Caco-2 (cell line): ENCODE measurements at regions of chr6 and their contacts with region 1.

Region 1: DNA sequence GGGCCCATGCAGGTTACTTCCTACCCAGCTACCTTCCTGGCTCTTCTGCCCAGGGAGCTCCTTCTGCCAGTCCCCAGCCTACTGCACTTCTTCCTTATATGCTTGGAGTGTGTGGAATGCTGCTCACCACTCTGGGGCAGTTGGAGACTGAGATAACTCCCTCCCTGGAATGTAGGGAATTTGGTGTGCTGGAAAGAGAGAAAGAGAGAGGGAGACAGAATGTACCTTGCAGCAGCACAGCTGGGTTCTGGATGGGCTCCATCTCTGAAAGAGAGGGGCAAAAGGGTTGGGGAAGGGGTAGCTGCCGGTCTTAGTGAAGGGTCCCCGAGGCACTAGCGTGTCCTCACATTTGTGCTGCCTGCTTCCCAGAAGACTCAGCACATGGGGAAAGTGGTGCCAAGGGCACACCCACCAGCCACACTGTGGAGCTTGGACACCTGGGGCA is 40.2 kb upstream of the DDR1 start:
- DNase-seq: peak; percentile 69 to 81
- H3K4me3 ChIP-seq: no peak overlapping the region
- H3K4me3 Mint-ChIP-seq: peak overlapping the region; percentile 13
- H3K27ac Mint-ChIP-seq: peak overlapping the region; percentile 79
- H3K4me1 ChIP-seq: peaks cover 49% of the 10 kb centered on the region
- H3K4me1 Mint-ChIP-seq: peaks cover 36% of the 10 kb centered on the region
- H3K27me3 ChIP-seq: no peaks in the 10 kb centered on the region
- H3K27me3 Mint-ChIP-seq: no peaks in the 10 kb centered on the region
- CTCF ChIP-seq: peak in 1 of 2 experiments; percentile 28

Region 2: DNA sequence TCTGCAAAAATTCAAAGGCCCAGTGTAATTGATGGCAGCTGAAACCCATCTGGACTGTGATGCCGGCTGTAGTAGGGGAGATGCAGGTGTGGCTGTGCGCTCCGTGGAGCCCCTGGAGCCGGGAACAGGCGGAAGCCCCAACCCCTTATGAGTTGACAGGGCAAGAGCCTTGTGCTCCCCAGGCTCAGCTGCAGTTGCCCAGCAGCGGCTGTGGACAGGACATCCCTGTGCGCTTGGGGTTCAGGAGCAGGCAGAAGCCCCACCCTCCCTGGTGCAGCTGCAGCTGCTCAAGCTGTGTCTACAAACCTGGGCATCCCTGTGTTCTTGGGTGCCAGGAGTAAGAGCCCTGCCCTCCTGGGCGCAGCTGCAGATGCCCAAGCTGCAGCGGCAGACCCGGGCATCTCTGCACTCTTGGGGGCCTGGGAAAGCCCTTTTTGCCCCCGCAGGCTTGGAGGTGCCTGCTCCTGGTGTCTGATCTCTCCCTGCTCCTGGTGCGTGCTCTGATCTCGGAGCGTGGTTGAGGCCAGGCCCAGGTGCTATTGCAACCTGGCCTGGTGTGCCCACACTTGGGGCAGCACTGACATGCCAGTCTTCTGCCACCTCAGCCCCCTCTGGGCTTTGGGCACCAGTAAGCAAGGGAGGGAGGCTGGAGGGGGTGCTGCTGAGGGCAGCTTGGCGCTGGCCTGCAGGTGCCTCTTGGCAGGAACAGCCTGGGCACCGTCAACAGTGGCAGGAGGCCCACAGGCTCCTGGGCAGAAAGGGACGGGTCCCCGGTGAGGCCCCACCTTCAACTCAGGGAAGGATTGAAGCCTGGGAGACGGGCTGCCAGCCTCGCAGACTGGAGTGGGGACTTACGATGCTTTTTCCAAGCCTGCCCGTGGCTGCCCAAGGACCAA is 1643.1 kb before region 1 on chr6:
- CTCF ChIA-PET with region 1: no interaction called
- POLR2A ChIA-PET with region 1: no interaction called
- intact Hi-C with region 1: no loop called
- DNase-seq: no peak
- H3K4me3 ChIP-seq: no peak overlapping the region
- H3K4me3 Mint-ChIP-seq: no peak overlapping the region
- H3K27ac Mint-ChIP-seq: no peak overlapping the region
- H3K4me1 ChIP-seq: no peaks in the 10 kb centered on the region
- H3K4me1 Mint-ChIP-seq: peaks cover 11% of the 10 kb centered on the region
- H3K27me3 ChIP-seq: no peaks in the 10 kb centered on the region
- H3K27me3 Mint-ChIP-seq: no peaks in the 10 kb centered on the region
- CTCF ChIP-seq: no peak

Region 3: GRCh38 chr6:30717042-30717844 is 126.9 kb before region 1 on chr6 and contains the start of gene MDC1:
- CTCF ChIA-PET with region 1: no interaction called
- POLR2A ChIA-PET with region 1: no interaction called
- intact Hi-C with region 1: no loop called
- DNase-seq: peak; percentile 99 to 100
- H3K4me3 ChIP-seq: peak within 1 kb of the TSS; percentile 56
- H3K4me3 Mint-ChIP-seq: peak within 1 kb of the TSS; percentile 95
- H3K27ac Mint-ChIP-seq: peak within 1 kb of the TSS; percentile 100
- H3K4me1 ChIP-seq: peaks cover 10% of the 10 kb centered on the region; the same call in 1 of the 2 replicates
- H3K4me1 Mint-ChIP-seq: peaks cover 14% of the 10 kb centered on the region
- H3K27me3 ChIP-seq: no peaks in the 10 kb centered on the region
- H3K27me3 Mint-ChIP-seq: no peaks in the 10 kb centered on the region
- CTCF ChIP-seq: peak; percentile 17 to 31
- total RNA-seq, gene MDC1: 46.6 and 48.6 TPM in 2 replicates

Region 4: DNA sequence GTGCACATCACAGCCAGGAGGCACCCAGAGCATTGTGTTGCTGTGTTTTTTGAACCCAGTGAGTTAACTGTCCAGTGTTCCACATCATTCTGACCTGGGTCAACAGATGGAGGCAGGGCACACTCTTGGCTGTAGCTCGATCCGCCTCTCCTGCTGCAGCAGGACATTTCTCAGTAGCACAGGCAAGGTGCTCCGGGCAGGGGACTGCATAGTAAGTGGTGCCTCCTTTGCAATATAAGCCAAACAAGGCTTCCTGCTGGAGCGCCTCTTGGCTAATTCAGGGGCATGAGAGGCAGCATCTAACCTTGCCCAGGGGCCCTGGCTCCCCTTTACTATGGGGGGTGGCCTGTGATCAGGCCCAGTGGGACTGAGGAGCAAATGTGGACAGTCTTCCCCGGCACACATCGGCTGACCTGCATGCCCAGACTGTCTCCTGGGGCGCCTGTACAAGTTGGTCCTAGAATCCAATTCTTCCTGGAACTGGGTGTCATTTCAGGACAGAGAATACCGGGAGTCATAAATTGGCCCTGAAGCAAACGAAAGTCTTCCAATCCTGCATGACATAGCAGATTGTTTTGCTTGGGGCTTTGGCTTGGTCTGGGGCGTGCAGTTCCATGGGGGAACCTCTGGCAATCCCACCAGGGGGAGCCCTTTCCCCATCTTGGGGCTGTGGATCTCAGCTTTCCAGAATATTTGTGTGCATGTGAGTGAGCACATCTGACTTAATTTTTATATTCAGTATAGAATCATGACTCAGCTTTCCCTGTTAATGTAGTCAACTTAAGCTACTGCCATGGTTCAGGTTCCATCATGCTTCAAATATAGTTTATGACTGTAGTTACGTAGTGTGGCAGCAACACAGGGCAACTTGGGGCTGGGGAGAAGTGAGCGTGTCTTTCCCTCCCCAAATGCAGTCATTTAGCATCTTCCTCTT is 15.8 kb before region 1 on chr6:
- CTCF ChIA-PET with region 1: interaction called, 28 read pairs
- POLR2A ChIA-PET with region 1: interaction called, 5 read pairs
- intact Hi-C with region 1: no loop called
- DNase-seq: peak; percentile 83 to 91
- H3K4me3 ChIP-seq: no peak overlapping the region
- H3K4me3 Mint-ChIP-seq: no peak overlapping the region
- H3K27ac Mint-ChIP-seq: peak overlapping the region; percentile 43
- H3K4me1 ChIP-seq: peaks cover 16% of the 10 kb centered on the region
- H3K4me1 Mint-ChIP-seq: peaks cover 27% of the 10 kb centered on the region
- H3K27me3 ChIP-seq: no peaks in the 10 kb centered on the region
- H3K27me3 Mint-ChIP-seq: no peaks in the 10 kb centered on the region
- CTCF ChIP-seq: peak; percentile 85 to 89

Region 5: GRCh38 chr6:30877419-30878371 is 33.6 kb after region 1 on chr6:
- CTCF ChIA-PET with region 1: interaction called, 21 read pairs
- POLR2A ChIA-PET with region 1: interaction called, 3 read pairs
- intact Hi-C with region 1: loop called (anchors 1 kb)
- DNase-seq: peak; percentile 86
- H3K4me3 ChIP-seq: peak overlapping the region; percentile 10; the same call in 1 of the 2 replicates
- H3K4me3 Mint-ChIP-seq: peak overlapping the region; percentile 30
- H3K27ac Mint-ChIP-seq: no peak overlapping the region
- H3K4me1 ChIP-seq: peaks cover 12% of the 10 kb centered on the region
- H3K4me1 Mint-ChIP-seq: peaks cover 13% of the 10 kb centered on the region
- H3K27me3 ChIP-seq: no peaks in the 10 kb centered on the region
- H3K27me3 Mint-ChIP-seq: no peaks in the 10 kb centered on the region
- CTCF ChIP-seq: peak; percentile 89 to 90